MCF 10A (cell line): ENCODE measurements at regions of chr14 and their contacts with region 1.

Region 1: GRCh38 chr14:23665375-23666192 is 29.4 kb downstream of the DHRS2 start:
- DNase-seq: peak; percentile 58
- H3K4me3 Mint-ChIP-seq: no peak overlapping the region
- H3K27ac Mint-ChIP-seq: no peak overlapping the region
- H3K4me1 Mint-ChIP-seq: peaks cover 11% of the 10 kb centered on the region
- H3K27me3 Mint-ChIP-seq: peaks cover 52% of the 10 kb centered on the region
- CTCF ChIP-seq: peak; percentile 48

Region 2: GRCh38 chr14:23929822-23930294 is 264.3 kb after region 1 on chr14:
- CTCF ChIA-PET with region 1: interaction called, 22 read pairs
- POLR2A ChIA-PET with region 1: no interaction called
- intact Hi-C with region 1: loop called (anchors 1 kb)
- DNase-seq: peak; percentile 80
- H3K4me3 Mint-ChIP-seq: no peak overlapping the region
- H3K27ac Mint-ChIP-seq: no peak overlapping the region
- H3K4me1 Mint-ChIP-seq: no peaks in the 10 kb centered on the region
- H3K27me3 Mint-ChIP-seq: no peaks in the 10 kb centered on the region
- CTCF ChIP-seq: peak; percentile 73

Region 3: DNA sequence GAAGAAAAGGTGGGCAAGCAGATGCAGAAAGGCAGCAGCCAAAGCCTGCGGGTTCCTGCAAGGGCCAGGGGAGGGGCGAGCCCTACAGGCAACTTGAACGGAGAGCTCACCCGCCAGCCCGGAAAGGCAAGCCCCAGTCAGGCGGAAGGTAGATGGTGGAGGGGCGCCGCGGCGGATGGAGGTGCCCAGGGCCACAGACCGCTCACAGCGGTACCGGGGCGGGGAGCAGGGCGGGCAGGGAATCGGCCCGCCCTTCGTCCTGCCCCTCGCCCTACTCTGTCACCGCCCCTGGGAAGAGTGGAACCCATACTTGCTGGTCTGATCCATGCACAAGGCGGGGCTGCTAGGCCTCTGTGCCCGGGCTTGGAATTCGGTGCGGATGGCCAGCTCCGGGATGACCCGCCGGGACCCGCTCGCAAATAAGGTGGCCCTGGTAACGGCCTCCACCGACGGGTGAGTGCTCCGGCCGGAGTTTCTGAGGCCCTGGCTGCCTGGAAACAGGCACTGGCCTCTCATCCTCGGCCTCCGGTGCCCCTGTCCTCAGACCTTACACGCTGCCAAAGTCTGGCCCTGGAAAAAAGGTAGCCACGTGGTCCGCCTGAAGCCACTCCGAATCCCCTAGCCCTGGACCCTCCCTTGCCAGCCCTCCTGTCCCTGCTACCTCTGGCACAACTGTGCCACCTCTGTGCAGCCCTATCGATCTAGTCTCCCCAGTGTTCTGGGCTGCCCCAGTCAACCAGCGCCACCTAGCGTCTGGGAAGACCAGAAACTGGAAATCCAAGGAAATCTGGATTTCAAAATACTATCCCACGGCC is 288.1 kb after region 1 on chr14 and contains the start of gene DHRS4:
- CTCF ChIA-PET with region 1: no interaction called
- POLR2A ChIA-PET with region 1: no interaction called
- intact Hi-C with region 1: loop called (anchors 5 kb)
- DNase-seq: peak; percentile 86
- H3K4me3 Mint-ChIP-seq: peak within 1 kb of the TSS; percentile 90
- H3K27ac Mint-ChIP-seq: peak within 1 kb of the TSS; percentile 93
- H3K4me1 Mint-ChIP-seq: peaks cover 19% of the 10 kb centered on the region
- H3K27me3 Mint-ChIP-seq: no peaks in the 10 kb centered on the region
- CTCF ChIP-seq: peak; percentile 77
- total RNA-seq, gene DHRS4: 28.4 and 32.5 TPM in 2 replicates